ENCODE measurements at regions of chr17 and their contacts with region 1.

Region 1: DNA sequence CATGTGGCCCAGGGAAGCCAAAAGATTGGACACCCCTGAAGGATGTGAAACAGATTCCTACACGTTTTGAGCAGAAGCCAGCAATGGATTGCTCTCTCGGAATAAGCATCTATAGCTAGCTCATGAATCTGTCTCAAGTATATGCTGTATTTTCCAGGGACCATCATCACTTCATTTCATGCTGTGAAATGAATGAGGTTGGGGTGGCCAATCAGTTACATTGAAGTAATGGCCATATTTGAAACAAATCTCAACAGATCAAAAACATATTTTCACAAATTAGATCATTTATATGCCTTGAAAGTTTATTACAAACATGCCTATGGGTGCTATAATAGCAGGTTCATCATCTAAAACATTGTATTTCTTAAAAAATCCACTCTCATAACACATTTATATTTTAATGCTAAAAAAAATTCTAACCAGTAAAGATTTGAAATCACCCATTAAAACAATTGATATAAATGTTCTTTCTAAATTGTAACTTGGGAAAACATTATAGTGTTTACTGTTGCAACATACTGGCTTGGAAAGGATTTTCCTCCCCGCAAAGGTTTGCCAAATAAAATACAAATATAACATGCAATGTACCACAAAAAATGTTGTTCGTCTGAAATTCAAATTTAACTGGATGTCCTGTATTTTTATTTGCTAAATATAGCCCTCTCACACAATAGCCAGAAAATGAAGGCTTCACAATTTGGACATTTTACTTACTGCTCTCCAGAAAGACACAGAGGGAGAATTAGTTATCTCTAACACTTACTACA is 743.6 kb downstream of the KCNJ2 start:
- DNase-seq: no peak
- ATAC-seq: no peak

Region 2: GRCh38 chr17:72046643-72047612 is 1134.0 kb after region 1 on chr17:
- intact Hi-C with region 1: loop called (anchors 10 kb)
- DNase-seq: no peak
- ATAC-seq: no peak

Measured in Right ventricle myocardium inferior (tissue), 1 donor.